Motor neuron (in vitro differentiated cells): ENCODE measurements at regions of chr2 and their contacts with region 1.

Region 1: GRCh38 chr2:118855451-118856279 is 8.2 kb upstream of the EN1 start:
- ATAC-seq: peak; percentile 90 to 96 (median 92)
- H3K4me3 ChIP-seq: peak overlapping the region; percentile 26 to 41 (median 32)
- H3K27ac ChIP-seq: no peak overlapping the region
- H3K4me1 ChIP-seq: no peaks in the 10 kb centered on the region

Region 2: GRCh38 chr2:118032169-118033013 is 823.3 kb before region 1 on chr2:
- in situ Hi-C with region 1: loop called in 5 of 9 experiments (anchors 25 kb)
- ATAC-seq: peak in 4 of 8 experiments; percentile 50 to 84 (median 82)
- H3K4me3 ChIP-seq: no peak overlapping the region
- H3K27ac ChIP-seq: no peak overlapping the region
- H3K4me1 ChIP-seq: no peaks in the 10 kb centered on the region

Region 3: DNA sequence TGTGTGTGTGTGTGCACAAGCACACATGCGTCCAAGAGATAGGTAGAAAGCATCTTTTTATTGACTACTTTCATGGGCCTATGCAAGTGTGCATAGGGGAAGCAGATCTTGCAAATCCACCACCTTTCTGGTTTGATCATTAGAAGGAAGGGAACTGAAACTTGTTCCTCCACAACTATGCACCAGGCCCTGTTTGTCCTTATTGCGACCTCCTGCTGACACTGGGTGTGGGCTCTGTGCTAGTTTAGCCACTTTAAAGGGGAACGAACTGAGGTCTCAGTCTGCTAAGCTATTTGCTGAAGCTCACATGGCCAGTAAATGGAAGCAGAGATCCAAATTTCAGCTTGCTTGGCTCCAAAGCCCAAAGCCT is 799.5 kb before region 1 on chr2:
- in situ Hi-C with region 1: loop called in 1 of 9 experiments (anchors 10 kb)
- ATAC-seq: no peak
- H3K4me3 ChIP-seq: no peak overlapping the region
- H3K27ac ChIP-seq: no peak overlapping the region
- H3K4me1 ChIP-seq: peaks cover 29 to 50% of the 10 kb centered on the region in 2 donors

Region 4: DNA sequence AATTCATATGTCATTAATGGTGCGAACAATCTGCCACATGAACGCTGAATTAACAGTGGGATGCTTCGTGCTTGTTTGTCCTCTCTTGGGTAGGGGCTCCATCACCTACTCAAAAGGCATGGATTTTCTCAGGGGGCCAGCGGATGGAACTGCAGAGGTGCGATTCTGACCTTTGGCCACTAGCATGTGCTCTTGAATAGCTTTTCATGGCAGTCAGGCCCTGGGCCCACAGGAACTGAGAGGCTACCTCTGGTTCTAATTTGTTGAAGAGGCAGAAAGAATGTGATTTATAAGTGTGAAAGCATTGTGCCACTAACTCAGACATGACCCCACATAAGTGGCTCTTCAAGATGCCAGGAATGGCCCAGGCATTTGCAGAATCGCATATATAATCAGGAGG is 484.1 kb before region 1 on chr2:
- in situ Hi-C with region 1: loop called in 3 of 9 experiments (anchors 10 to 25 kb)
- ATAC-seq: peak; percentile 60 to 94 (median 76)
- H3K4me3 ChIP-seq: no peak overlapping the region
- H3K27ac ChIP-seq: no peak overlapping the region
- H3K4me1 ChIP-seq: peaks cover 11 to 15% of the 10 kb centered on the region in 2 donors

Region 5: DNA sequence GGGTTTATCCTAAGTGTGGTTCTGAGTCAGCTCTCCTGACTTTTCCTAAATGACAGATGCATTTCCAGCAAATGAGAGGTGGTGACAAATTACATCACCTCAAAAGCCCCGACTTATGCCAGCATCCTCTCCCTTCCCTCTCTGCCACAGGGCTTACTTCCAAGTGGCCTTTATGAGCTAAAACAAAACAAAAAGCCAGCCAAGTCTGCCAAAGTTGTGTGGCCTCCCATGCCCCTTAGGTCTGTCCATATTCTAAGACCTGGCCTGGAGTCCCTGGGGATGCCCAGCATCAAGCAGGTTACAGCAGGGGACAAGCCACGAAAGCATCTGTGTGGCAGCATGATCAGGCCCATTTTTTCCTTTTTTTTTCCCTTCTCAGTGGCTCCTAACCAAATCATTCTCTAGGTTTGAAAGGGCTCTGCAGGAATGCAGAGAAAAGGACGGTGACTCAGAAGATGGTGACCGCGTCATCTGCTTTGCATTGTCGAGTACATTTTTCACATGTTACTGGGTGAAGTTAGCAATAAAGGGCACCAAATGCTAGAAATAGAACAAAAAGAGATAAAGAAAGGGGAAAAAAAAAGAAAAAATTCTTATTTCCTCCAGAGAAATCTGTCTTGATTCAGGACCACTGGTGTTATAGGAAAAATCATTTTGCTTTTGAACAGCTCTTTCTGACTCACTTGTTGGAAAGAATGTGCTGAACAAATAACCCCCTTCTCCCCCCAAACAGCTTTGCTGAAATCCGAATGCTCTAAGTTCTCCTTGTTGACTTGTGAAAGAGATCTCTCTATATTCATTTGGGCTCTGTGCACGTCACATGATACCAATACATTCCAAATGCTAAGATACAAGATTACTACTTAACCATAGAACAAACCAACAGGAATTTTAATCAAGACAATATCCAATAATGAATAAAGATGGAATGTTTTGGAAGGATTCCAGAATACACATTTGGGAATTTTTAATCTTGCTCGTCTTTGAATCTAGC is 186.9 kb before region 1 on chr2:
- in situ Hi-C with region 1: loop called in 1 of 9 experiments (anchors 25 kb)
- ATAC-seq: peak; percentile 67 to 93 (median 90)
- H3K4me3 ChIP-seq: no peak overlapping the region
- H3K27ac ChIP-seq: peak overlapping the region; percentile 49 to 54
- H3K4me1 ChIP-seq: peaks cover 17 to 23% of the 10 kb centered on the region in 2 donors

Region 6: DNA sequence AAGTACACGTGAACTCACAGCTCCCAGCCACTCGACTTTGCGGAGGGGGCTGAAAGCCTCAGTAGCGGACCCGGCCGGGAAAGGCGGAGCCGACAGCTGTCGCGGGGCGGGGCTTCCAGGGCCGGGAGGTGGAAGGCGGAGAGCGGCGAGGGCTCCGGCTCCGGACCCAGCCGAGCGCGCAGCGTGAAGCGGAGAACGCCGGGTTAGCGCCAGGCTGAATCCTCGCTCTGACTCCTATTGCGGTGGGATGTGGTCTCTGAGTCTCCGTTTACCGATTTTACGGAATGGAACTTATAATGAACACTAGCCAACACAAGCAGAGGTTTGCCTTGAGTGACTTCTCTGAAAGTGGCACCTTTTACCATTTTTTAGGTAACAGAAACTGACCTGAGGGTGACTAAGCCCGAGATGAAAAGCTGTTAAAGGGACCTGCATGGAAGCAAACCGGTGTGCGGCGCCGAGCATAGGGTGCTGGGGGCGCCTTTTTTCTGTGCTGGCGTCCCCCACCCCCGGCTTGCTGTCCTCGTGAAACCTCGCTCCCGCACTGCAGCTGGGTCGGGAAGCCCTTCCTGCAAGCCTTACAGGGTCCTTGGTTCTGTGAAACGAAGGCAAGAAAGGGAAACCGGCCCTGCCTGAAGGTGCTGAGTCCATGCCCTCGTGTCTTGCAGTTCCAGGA is 81.1 kb before region 1 on chr2:
- in situ Hi-C with region 1: no loop called
- ATAC-seq: peak; percentile 98 to 99 (median 99)
- H3K4me3 ChIP-seq: peak overlapping the region; percentile 30 to 40 (median 37)
- H3K27ac ChIP-seq: no peak overlapping the region
- H3K4me1 ChIP-seq: peaks cover 0 to 3% of the 10 kb centered on the region in 2 donors